ENCODE measurements at regions of chr19 and their contacts with region 1.

Region 1: GRCh38 chr19:6021878-6022569 is 44.1 kb upstream of the RANBP3 start:
- DNase-seq: peak; percentile 79
- ATAC-seq: peak; percentile 95

Region 2: GRCh38 chr19:5775668-5776309 is 246.2 kb before region 1 on chr19:
- intact Hi-C with region 1: loop called (anchors 10 kb)
- DNase-seq: no peak
- ATAC-seq: no peak

Region 3: GRCh38 chr19:5827891-5828660 is 193.9 kb before region 1 on chr19:
- intact Hi-C with region 1: no loop called
- DNase-seq: peak; percentile 92
- ATAC-seq: peak; percentile 75

Region 4: DNA sequence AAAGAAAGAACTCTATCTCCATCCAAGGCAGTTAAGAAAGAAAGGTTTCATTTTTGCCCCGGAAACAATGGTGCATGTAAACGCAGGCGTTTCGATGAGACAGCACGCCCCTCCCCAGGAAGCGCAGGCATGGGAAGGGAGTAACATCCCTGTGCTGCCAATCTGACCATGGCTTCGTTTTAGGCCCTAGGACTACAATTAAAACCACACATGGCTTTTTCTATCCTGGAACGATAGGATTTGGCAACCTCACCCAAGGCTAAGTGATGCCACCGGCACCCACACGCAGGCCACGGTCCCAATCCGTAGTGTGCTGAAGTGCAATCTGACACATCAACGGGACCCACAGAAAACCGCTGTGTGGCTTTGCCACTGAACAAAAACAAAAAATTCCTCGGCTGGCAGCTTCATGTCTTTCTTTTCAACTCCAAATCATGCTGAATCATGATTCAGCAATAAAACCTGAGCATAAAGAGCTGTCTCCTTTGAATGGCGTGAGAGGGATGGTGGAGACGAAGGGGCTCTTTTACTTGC is 68.3 kb before region 1 on chr19:
- intact Hi-C with region 1: no loop called
- DNase-seq: no peak
- ATAC-seq: no peak

Region 5: DNA sequence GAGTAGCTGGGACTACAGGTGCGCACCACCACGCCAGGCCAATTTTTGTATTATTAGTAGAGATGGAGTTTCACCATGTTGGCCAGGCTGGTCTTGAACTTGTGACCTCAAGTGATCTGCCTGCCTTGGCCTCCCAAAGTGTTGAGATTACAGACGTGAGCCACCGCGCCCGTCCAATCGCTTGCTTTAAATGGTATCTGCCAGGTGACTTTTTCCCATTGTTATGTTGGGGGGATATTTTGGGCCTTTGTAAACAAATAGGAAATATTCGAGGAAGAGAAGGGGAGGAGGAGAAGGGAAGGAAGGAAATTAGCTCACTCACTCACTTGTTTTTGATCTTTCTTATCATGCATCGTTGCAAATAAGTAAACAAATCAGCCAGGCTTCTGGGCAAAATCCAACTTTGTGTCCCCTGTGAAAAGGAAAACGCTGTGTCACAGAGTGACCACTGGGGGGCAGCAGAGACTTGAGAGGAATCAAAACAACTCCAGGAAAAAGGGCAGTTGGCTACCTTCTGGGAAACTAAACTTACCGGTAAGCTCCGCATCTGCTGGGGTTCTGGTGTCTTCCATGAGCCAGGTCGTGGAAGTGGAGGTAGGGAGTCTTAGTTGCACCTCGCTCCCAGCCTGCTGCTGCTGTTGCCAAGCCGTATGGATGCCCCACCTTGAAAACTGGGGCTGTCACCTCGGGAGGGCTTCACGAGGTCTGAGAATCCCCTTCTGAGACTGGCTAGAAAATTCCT is 34.8 kb before region 1 on chr19:
- intact Hi-C with region 1: loop called (anchors 2 kb)
- DNase-seq: peak; percentile 71
- ATAC-seq: peak; percentile 72